ENCODE measurements at regions of chr17 and their contacts with region 1.

Region 1: DNA sequence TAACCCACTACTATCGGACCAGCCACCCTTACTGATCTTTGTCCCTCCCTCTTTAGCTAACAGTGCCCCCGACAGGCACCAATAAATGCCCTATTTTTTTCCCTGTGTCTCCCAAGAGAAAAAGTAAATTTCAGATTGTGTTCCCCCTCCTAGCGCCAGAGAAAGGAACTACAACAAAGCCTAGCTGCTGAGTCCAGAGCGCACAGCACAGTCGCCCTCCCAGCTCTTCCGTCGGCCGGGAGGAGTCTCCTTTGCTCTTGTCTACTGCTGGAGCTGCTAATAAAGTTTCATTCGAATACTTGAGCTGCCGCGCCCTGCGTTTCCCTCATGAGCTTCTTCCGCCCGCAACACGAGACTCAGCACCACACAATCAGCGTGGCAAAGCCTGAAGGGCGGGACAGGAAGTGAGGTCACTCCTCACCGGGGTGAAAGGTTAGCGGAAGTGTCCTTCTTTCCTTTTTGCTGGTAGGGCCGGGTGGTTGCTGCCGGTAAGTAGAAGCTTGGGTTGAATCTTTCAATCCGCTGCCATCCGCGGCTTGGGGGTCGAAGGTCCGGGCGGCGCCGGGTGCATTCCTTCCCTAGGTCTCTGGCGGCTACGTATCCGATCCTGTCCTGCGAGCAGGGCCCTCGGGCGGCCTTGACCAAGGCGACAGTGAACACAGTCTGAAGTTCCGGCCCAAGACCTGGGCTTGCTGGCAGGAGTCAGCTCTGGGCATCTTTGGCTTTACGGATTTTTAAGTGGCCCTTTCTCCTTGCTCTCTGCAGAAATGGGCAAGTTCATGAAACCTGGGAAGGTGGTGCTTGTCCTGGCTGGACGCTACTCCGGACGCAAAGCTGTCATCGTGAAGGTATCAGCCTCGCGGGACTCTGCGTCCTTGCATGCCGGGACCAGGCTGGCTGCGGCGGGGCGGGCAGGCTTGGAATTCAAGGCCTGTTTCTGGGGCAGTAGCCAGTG is at the start of gene RPL27:
- DNase-seq: peak; percentile 95

Region 2: DNA sequence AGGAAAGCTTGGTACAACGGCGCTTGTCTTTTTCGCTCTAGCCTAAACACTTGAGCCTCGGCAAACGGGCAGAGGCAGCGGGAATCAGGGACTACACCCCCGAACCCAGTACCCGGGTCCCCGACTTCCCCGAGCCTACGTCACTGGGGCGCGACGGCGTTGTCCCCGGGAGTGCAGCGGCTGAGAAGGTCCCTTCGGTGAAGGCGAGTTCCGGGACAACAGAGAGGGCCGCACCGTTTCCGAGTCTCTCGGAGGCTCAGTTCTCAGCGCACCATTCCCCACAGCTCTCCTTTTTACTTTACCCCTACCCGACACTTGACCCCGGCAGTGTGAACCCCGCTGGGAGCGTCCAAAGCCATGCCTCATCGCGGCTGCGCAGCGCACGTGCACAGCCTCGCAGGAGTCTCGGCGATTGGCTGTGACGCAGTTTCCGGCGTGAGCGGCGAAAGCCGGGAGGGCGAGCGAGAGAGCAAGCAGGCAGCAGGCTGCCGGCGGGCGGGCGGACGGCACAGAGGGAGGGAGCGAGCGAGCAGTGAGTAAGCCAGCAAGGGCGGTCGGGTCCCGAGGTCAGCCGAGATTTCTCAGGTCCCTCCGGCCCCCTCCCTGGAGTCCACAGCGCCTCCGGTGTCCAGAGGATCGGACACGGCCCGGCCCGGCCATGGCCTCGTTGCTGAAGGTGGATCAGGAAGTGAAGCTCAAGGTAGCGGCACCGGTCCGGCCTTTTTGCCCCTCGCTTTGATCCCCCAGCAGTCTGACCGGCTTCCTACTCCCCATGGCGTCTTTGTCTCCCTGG is 165.1 kb before region 1 on chr17 and contains the start of gene PSME3:
- CTCF ChIA-PET with region 1: no interaction called
- POLR2A ChIA-PET with region 1: interaction called, 16 read pairs
- DNase-seq: peak; percentile 93

Region 3: DNA sequence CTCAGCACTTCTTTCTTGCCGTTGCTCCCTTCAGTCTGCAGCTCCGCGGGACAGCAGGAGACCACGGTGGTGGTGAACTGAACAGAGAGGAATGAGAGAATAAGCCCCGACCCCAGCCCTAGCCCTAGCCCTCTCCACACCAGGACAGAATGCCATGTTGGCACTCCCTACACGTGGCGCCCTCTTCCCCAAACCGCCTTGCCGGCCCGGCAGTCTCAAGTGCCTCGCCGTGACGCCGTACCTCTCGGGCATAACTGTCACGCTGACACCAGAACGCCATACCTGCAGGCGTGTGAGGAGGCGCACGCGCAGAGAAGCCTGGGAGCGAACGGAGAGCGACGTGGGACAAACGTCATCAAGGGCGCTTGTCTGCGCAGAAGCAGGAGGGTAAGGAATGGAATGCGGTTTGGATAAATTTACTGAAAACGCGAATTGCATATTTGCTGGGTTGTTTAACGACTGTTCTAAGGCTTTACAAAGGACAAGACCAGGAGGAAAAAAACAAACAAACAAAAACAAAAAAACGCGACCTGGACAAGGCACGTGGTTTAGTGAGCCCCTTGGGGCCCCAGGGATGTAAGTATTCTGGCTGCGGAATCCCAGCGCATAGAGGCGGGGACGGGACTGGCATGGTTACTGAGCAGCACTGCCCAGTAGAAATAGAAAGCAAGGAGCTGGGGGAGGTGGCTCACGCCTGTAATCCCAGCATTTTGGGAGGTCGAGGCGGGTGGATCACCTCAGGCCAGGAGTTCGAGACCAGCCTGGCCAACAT is 33.9 kb before region 1 on chr17 and contains the start of gene AARSD1:
- CTCF ChIA-PET with region 1: interaction called, 4 read pairs
- POLR2A ChIA-PET with region 1: interaction called, 50 read pairs
- DNase-seq: peak; percentile 90

Region 4: DNA sequence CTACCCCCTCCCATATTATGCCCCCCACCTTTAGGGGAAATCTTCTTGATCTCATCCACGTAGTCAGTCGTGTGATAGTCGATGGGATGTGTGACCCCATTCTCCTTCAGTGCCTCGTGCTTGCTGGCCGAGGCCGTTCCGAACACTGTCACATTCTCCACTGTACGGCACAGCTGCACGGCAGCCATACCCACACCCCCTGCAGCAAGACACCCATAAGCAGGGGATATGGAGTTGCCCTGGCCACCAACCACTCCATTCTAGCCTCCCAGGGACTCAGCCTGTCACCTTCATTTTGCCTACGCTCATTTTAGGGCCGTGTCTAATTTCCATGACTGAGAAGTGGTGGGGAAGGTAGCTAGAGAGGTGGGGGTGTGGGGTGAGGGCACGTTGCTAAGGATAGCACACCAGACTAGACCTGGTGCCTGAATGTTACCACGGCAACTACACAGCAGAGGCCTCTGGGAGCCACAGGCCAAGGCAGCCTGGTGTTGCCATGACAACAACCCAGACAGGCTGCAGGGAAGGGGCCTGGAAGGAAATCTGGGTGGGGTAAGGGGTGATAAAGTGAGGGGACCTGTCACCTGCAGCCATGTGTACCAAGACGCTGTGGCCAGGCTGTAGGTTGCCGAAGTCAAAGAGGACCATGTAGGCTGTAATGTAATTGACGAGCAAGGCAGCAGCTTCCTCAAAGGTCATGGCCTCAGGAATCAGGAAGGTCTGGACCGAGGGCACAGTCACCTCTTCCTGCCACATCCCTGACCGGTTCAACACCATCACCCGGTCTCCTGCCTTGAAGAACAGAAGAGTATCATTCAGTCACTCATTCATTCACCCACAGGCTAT is 20.0 kb after region 1 on chr17:
- CTCF ChIA-PET with region 1: no interaction called
- POLR2A ChIA-PET with region 1: interaction called, 47 read pairs
- DNase-seq: no peak

Region 5: DNA sequence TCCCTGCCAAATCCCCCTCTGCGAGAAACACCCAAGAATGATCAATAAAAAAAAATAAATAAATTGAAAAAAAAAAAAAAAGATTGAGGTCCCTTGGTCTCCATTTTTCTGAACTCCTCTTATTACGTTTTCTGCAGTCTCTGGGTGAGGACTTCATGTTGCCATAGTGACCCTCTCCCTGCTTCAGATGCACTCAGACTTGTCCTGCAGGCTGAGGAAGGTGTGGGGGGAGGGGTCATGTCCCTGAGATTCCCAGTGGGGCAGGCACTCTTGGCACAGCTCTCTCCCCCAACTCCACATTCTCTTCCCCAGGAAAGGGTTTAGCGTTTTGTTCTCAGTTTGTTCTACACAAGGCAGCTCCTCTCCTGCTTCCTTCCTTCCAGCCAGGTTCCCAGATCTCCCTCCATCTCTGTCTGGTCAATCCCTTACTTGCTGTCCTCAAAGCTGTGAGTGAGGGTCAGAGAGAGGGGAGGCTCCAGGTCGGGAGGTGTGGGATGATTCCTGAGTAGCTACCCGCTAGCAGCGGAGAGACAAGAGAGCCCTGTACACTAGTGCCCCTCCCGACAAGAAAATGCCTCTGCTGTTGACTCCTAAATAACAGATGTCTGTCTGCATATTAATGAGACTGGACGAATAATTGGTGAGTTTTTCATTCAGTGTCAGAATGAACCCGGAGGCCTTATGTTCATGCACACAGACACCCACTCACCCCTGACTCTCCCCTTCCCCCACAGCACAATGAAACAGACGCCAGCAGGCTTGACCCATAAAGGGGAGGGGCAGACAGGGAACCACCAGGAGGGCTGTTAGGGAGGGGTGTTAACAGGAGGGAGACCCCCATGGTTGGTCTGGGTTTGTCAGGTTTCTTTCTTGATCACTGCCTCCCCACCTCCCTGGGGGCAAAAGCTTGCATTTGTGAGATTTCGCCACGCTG is 36.0 kb after region 1 on chr17:
- CTCF ChIA-PET with region 1: no interaction called
- POLR2A ChIA-PET with region 1: no interaction called
- DNase-seq: no peak

Region 6: DNA sequence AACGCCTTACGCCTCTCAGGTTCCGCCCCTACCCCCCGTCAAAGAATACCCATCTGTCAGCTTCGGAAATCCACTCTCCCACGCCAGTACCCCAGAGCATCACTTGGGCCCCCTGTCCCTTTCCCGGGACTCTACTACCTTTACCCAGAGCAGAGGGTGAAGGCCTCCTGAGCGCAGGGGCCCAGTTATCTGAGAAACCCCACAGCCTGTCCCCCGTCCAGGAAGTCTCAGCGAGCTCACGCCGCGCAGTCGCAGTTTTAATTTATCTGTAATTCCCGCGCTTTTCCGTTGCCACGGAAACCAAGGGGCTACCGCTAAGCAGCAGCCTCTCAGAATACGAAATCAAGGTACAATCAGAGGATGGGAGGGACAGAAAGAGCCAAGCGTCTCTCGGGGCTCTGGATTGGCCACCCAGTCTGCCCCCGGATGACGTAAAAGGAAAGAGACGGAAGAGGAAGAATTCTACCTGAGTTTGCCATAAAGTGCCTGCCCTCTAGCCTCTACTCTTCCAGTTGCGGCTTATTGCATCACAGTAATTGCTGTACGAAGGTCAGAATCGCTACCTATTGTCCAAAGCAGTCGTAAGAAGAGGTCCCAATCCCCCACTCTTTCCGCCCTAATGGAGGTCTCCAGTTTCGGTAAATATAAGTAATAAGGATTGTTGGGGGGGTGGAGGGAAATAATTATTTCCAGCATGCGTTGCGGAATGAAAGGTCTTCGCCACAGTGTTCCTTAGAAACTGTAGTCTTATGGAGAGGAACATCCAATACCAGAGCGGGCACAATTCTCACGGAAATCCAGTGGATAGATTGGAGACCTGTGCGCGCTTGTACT is 127.1 kb after region 1 on chr17 and contains the start of gene BRCA1:
- CTCF ChIA-PET with region 1: no interaction called
- POLR2A ChIA-PET with region 1: interaction called, 10 read pairs
- DNase-seq: peak; percentile 97

Measured in HEK293T (cell line).